ENCODE measurements at regions of chr17 and their contacts with region 1.

Region 1: DNA sequence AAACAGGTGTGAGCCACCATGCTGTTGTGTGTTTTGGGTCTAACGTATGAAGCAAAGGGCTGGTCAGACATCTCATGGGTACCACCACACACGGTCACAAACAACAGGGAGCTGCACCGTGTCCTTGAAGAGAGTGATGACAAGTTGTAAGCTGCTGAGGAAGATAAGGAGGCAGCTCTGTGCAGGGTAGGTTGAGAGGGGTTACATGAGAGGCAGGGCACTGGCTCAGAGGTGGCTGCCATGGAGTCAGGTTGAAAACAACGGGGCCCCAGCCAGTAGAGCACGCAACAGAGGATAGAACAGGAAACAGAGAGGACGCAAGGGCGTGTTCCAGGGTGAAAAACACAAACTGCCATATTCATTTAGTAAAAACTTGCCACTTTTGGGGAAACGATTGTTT is 52.2 kb downstream of the TRARG1 start:
- DNase-seq: no peak
- ATAC-seq: no peak
- H3K4me3 ChIP-seq: no peak overlapping the region
- H3K27ac ChIP-seq: no peak overlapping the region
- H3K4me1 ChIP-seq: no peaks in the 10 kb centered on the region
- CTCF ChIP-seq: no peak
- EP300 ChIP-seq: no peak
- POLR2A ChIP-seq: no peak
- RAD21 ChIP-seq: no peak

Region 2: DNA sequence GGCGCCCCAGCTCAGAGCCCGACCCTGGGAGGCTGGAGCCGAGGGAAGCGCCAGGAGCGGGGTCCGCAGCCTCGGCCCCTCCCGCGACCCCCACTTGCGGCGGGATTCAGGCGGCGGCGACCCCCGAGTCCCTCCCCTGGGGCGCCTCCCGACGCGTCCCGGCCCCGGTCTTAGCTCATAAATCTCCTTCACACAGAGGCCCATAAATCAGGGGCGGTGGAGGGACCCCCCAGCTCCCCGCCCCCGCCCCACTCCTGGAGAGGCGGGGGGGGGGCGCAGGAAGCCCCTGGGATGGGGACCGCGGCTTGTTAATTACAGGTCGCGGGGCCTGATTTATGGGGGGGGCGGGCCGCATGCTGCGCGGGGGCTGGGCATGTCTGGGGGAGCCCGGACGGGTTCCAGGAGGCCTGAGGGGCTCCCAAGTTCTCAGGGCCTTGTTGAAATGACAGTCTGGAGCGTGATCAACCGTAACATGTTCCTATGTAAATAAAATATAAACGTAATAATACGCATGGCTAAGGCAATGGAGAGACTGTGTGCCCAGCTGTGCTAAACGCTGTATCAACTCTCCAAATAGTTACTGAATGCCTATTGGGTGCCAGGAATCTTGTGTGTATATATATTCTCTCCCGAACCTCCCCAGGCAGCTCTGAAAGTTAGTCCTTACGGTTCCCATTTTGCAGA is 71.5 kb before region 1 on chr17:
- CTCF ChIA-PET with region 1: interaction called, 21 read pairs
- POLR2A ChIA-PET with region 1: interaction called, 3 read pairs
- DNase-seq: no peak
- ATAC-seq: peak in 1 of 2 experiments; percentile 12; a peak in 3 of 6 replicates
- H3K4me3 ChIP-seq: peak overlapping the region; percentile 57
- H3K27ac ChIP-seq: peak overlapping the region; percentile 72 to 82
- H3K4me1 ChIP-seq: no peaks in the 10 kb centered on the region
- CTCF ChIP-seq: no peak
- EP300 ChIP-seq: no peak
- POLR2A ChIP-seq: no peak
- RAD21 ChIP-seq: no peak

Region 3: GRCh38 chr17:1267471-1267947 is 64.2 kb before region 1 on chr17:
- CTCF ChIA-PET with region 1: interaction called, 40 read pairs
- POLR2A ChIA-PET with region 1: no interaction called
- DNase-seq: peak in 1 of 2 experiments; percentile 30
- ATAC-seq: peak in 1 of 2 experiments; percentile 5; a peak in 3 of 6 replicates
- H3K4me3 ChIP-seq: peak overlapping the region; percentile 59
- H3K27ac ChIP-seq: peak overlapping the region; percentile 90 to 93
- H3K4me1 ChIP-seq: peaks cover 11% of the 10 kb centered on the region; the same call in 2 of the 3 replicates
- CTCF ChIP-seq: no peak
- EP300 ChIP-seq: no peak
- POLR2A ChIP-seq: no peak
- RAD21 ChIP-seq: no peak

Region 4: GRCh38 chr17:1275962-1276736 is 55.6 kb before region 1 on chr17:
- CTCF ChIA-PET with region 1: interaction called, 53 read pairs
- POLR2A ChIA-PET with region 1: no interaction called
- DNase-seq: peak; percentile 54 to 79
- ATAC-seq: peak; percentile 68 to 88
- H3K4me3 ChIP-seq: 0 out of 3 replicates have a peak overlapping the region, but pooled peaks have one; percentile 24
- H3K27ac ChIP-seq: peak overlapping the region in 1 of 2 experiments; percentile 5; a peak in 2 of 6 replicates
- H3K4me1 ChIP-seq: 0 out of 3 replicates have a peak, but pooled peaks cover 4% of the 10 kb centered on the region
- CTCF ChIP-seq: peak; percentile 93
- EP300 ChIP-seq: no peak
- POLR2A ChIP-seq: no peak
- RAD21 ChIP-seq: peak; percentile 92 to 94

Region 5: GRCh38 chr17:1298606-1299005 is 33.1 kb before region 1 on chr17:
- CTCF ChIA-PET with region 1: interaction called, 13 read pairs
- POLR2A ChIA-PET with region 1: no interaction called
- DNase-seq: no peak
- ATAC-seq: peak; percentile 5 to 37; a peak in 3 of 6 replicates
- H3K4me3 ChIP-seq: no peak overlapping the region
- H3K27ac ChIP-seq: no peak overlapping the region
- H3K4me1 ChIP-seq: no peaks in the 10 kb centered on the region
- CTCF ChIP-seq: no peak
- EP300 ChIP-seq: no peak
- POLR2A ChIP-seq: no peak
- RAD21 ChIP-seq: no peak